Activated CD4-positive, alpha-beta T cell treated with anti-CD3 and anti-CD28 coated beads, Interleukin-2, amount 10 ng/mL, durations not matched to agents 7 days and 5 days (primary cell): ENCODE measurements at regions of chr11 and their contacts with region 1.

Region 1: DNA sequence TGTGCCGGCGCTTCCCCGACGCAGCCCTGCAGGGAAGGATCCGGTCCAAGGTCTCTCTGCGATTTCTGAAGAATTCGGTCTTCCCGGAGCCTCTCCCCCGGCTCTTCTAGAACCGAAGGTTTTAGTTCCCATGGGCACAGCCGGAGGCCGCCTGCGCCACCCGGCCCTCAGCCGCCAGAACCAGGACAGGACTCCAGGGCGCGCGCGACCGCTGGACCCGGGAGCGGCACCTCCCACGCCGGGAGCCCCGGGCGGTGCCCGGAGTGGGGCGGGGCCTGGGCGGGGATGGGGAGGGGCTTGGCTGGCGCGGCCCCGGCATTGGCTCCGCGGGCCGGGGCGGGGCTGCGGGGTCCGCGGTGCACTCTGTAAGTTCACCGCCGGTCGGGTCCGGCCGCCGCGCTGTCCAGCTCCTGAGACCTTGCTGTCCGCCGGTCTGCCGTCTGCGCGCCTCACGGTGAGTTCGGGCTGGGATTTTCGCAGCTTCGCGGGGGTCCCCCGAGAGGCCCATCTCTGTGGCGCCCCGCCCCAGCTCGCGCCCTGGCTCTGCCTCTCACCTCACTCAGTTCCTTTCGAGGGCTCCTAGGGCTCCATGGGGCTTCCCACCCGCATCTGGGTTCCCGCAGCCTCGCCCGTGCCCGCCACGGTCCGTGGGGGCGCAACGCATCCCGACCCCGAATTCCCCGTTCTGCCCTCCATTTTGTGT is at the start of gene CDC42EP2:
- DNase-seq: peak; percentile 73
- H3K4me3 Mint-ChIP-seq: peak within 1 kb of the TSS; percentile 70
- H3K27ac Mint-ChIP-seq: peak within 1 kb of the TSS; percentile 31
- H3K4me1 Mint-ChIP-seq: peaks cover 5% of the 10 kb centered on the region
- H3K27me3 Mint-ChIP-seq: peaks cover 6% of the 10 kb centered on the region
- total RNA-seq, gene CDC42EP2: 0.25 to 0.67 TPM

Region 2: DNA sequence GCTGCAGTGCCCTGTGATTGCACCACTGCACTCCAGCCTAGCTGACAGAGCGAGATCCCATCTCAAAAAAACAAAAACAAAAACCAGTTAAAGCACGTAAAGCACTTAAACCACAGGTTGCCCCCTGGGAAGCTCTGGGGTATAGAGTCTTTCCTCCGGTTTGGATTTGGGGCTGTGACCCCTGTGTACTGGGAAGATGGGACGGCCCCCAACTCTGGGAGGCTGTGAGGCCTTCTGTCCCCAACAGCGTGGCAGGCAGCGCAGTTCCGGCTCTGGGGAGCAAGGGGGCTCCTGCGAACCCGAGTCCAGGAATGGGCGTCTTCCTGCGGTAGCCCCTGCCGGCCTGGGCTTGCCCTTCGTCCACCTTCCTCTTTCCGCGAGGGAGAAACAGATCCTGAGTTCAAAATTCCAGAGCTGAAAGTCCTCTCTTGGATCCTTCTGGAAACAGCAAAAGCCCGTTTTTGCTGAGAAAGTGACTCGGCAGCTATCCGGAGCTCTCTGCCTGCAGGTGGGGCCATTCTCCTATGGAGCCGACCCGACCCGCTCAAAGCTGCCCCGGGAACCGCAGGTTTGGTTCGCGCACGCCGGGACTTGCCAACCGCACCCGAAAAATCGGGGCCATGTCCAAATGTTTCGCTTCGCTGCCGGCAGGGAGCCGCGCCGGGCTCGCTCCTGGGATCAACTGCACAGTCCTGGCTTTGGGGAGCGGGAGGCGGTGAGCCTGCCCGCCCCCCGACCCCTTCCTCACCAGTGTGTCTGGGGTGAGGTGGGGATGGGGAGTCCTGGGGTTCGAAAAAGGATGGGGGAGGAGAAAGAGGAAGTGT is 89.2 kb before region 1 on chr11:
- CTCF ChIA-PET with region 1: interaction called, 17 read pairs
- POLR2A ChIA-PET with region 1: interaction called, 5 read pairs
- DNase-seq: peak; percentile 69
- H3K4me3 Mint-ChIP-seq: peak overlapping the region; percentile 71
- H3K27ac Mint-ChIP-seq: peak overlapping the region; percentile 36
- H3K4me1 Mint-ChIP-seq: peaks cover 25% of the 10 kb centered on the region
- H3K27me3 Mint-ChIP-seq: peaks cover 22% of the 10 kb centered on the region

Region 3: DNA sequence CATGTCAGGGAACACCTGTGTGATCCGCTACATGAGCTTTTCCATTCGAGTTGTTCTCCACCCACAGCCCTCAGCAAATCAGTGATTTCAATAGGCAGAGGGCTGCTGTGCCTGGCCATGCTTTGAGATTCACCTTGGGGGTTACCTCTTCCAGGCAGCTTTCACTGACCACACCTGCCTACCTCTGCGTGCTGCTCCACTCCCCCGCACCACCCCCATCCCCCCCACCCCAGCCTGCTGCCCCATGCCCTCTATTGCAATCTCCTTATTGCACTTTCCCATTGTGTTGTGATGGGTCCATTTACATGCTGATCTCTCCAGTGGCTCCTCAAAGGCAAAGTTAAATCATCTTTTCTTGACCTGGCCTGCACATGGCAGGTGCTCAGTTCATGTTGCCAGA is 70.9 kb before region 1 on chr11:
- CTCF ChIA-PET with region 1: no interaction called
- POLR2A ChIA-PET with region 1: no interaction called
- DNase-seq: no peak
- H3K4me3 Mint-ChIP-seq: no peak overlapping the region
- H3K27ac Mint-ChIP-seq: no peak overlapping the region
- H3K4me1 Mint-ChIP-seq: no peaks in the 10 kb centered on the region
- H3K27me3 Mint-ChIP-seq: no peaks in the 10 kb centered on the region

Region 4: GRCh38 chr11:65274735-65275682 is 39.6 kb before region 1 on chr11:
- CTCF ChIA-PET with region 1: interaction called, 24 read pairs
- POLR2A ChIA-PET with region 1: no interaction called
- DNase-seq: peak; percentile 53
- H3K4me3 Mint-ChIP-seq: no peak overlapping the region
- H3K27ac Mint-ChIP-seq: peak overlapping the region; percentile 33
- H3K4me1 Mint-ChIP-seq: peaks cover 9% of the 10 kb centered on the region
- H3K27me3 Mint-ChIP-seq: no peaks in the 10 kb centered on the region

Region 5: DNA sequence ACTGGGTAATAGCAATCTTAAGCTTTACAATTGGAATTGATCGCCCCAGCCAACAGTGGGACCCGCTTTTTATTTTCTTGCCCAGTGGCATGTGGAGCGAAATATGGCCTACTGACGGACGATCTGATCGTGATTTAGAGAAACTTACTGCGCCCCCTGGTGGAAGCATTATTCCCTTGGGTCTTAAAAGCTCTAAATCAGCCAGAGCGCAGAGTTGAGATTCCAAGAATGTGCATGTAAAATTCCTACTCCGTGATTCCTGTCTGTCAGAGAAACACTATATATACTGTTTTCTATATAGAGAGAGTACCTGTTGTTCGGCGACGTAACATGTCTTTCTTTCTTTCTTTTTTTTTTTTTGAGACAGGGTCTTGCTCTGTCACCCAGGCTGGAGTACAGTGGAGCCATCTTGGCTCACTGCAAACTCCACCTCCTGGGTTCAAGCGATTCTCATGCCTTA is 15.3 kb after region 1 on chr11:
- CTCF ChIA-PET with region 1: interaction called, 45 read pairs
- POLR2A ChIA-PET with region 1: interaction called, 4 read pairs
- DNase-seq: peak; percentile 90
- H3K4me3 Mint-ChIP-seq: no peak overlapping the region
- H3K27ac Mint-ChIP-seq: no peak overlapping the region
- H3K4me1 Mint-ChIP-seq: peaks cover 17% of the 10 kb centered on the region
- H3K27me3 Mint-ChIP-seq: no peaks in the 10 kb centered on the region

Region 6: GRCh38 chr11:65425105-65425970 is 110.7 kb after region 1 on chr11:
- CTCF ChIA-PET with region 1: no interaction called
- POLR2A ChIA-PET with region 1: no interaction called
- DNase-seq: peak; percentile 91
- H3K4me3 Mint-ChIP-seq: peak overlapping the region; percentile 91
- H3K27ac Mint-ChIP-seq: peak overlapping the region; percentile 97
- H3K4me1 Mint-ChIP-seq: peaks cover 51% of the 10 kb centered on the region
- H3K27me3 Mint-ChIP-seq: peaks cover 5% of the 10 kb centered on the region